Calu3 (cell line): ENCODE measurements at regions of chr12 and their contacts with region 1.

Region 1: GRCh38 chr12:1346126-1346525 is 248.3 kb downstream of the FBXL14 start:
- DNase-seq: no peak
- H3K4me3 Mint-ChIP-seq: no peak overlapping the region
- H3K27ac Mint-ChIP-seq: peak overlapping the region; percentile 47
- H3K4me1 Mint-ChIP-seq: peaks cover 25% of the 10 kb centered on the region
- H3K27me3 Mint-ChIP-seq: no peaks in the 10 kb centered on the region
- CTCF ChIP-seq: no peak

Region 2: DNA sequence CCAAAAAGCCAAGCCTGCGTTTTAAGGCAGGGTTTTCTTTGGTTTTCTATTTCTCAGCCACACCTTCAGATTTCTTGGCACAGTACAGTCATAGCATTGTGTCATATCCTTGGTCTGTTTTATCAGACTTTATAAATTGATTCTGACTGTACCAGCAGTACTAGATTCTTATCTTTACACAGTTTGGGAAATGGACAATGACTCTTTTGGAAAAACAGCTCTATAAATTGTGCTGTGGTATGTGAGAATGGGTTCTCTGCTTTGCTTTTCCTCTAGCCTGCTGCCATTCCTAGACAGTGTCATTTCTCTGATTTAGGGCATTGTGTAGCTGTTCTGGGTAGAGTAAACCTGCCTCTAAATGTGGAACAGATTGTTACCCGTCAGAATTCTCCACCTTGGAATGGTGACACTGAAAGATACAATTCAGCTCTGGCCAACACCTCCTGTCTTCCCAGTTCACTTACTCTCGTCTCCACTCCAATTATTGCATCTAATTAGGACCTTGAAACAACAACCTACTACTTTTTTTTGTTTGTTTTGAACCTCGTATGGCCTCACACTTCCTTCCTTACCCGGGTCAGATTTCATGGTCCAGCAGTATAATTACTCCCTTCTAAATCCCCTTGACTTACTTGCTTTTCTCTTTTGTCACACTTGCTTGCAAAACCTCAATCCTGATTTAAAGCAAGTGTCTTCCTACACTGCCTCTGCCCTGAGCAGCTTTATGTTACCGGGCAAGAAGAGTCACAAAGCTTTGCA is 128.8 kb before region 1 on chr12:
- CTCF ChIA-PET with region 1: no interaction called
- intact Hi-C with region 1: loop called (anchors 10 kb)
- DNase-seq: peak; percentile 13
- H3K4me3 Mint-ChIP-seq: no peak overlapping the region
- H3K27ac Mint-ChIP-seq: no peak overlapping the region
- H3K4me1 Mint-ChIP-seq: peaks cover 1% of the 10 kb centered on the region
- H3K27me3 Mint-ChIP-seq: no peaks in the 10 kb centered on the region
- CTCF ChIP-seq: no peak

Region 3: GRCh38 chr12:1544996-1545700 is 199.0 kb after region 1 on chr12:
- CTCF ChIA-PET with region 1: no interaction called
- intact Hi-C with region 1: loop called (anchors 10 kb)
- DNase-seq: peak; percentile 18
- H3K4me3 Mint-ChIP-seq: no peak overlapping the region
- H3K27ac Mint-ChIP-seq: no peak overlapping the region
- H3K4me1 Mint-ChIP-seq: peaks cover 13% of the 10 kb centered on the region
- H3K27me3 Mint-ChIP-seq: no peaks in the 10 kb centered on the region
- CTCF ChIP-seq: peak; percentile 21